Endothelial cell of umbilical vein (primary cell): ENCODE measurements at regions of chr13 and their contacts with region 1.

Region 1: DNA sequence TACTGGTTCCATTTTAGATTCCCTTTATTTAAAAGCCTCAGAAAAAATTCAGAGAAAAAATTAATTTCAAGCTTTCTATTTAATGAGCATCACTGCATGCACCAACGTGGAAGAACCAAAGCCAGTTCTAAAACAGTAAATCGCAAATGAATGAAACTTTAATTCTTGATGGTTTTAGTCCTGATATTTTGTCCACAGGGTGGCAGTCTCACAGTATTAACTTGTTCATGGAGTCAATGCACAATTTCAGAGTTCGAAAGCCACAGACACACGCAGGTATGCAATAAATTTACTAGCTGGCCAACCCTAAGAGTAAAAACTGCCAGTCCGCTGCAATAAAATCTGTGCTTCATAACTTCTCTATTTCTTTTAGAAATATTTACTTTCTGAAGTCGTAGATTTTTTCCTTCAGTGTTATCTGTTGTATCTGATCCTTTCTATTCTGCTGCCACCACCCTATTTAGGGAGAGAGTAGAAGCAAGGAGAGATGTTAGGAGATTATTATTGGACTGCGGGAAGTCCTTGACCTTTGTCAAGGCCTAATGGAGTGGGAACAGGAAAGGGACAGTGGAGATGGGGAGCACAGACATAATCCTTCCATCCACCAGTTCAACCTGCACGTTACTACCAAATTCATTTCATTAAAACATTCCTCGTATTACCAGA is 7.0 kb upstream of the WBP4 start:
- DNase-seq: peak; percentile 60
- H3K4me3 ChIP-seq: no peak overlapping the region
- H3K27ac ChIP-seq: no peak overlapping the region
- H3K4me1 ChIP-seq: peaks cover 27% of the 10 kb centered on the region
- H3K27me3 ChIP-seq: no peaks in the 10 kb centered on the region
- CTCF ChIP-seq: peak; percentile 20 to 35
- POLR2A ChIP-seq: no peak

Region 2: DNA sequence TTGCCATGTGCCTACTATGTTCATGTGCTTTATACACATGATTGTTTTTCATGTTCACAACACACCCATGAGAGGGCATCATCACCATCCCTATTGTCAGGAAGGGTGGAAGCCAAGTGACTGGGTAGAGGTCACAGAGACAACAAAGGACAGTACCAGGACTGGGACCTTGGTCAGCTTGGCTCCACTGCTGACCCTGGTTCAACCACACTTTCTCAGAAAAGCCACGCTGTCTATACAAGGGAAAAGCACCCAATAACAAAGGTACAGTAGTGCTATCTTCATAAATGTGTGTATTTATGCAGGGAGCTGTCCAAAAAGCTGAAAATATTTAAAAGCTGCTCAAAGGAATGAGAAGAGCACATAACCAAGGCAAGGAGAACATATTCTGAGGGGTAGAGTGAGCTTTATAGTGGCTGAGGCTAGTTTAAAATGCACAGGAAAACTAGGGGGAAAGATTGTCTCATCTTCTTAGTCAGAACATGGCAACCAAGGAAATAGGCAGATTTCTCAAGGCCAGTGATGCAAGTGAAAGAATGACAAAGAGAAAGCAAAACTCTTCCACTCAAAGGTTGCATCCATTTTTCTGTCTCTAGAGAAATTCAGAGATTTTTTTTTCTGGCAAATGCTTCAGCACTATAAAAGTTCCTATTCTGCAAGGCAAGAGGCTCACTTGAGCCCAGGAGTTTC is 802.9 kb before region 1 on chr13:
- CTCF ChIA-PET with region 1: no interaction called
- POLR2A ChIA-PET with region 1: no interaction called
- dilution Hi-C with region 1: no loop called
- intact Hi-C with region 1: no loop called
- DNase-seq: no peak
- H3K4me3 ChIP-seq: no peak overlapping the region
- H3K27ac ChIP-seq: no peak overlapping the region
- H3K4me1 ChIP-seq: peaks cover 11% of the 10 kb centered on the region
- H3K27me3 ChIP-seq: no peaks in the 10 kb centered on the region
- CTCF ChIP-seq: no peak
- POLR2A ChIP-seq: no peak

Region 3: DNA sequence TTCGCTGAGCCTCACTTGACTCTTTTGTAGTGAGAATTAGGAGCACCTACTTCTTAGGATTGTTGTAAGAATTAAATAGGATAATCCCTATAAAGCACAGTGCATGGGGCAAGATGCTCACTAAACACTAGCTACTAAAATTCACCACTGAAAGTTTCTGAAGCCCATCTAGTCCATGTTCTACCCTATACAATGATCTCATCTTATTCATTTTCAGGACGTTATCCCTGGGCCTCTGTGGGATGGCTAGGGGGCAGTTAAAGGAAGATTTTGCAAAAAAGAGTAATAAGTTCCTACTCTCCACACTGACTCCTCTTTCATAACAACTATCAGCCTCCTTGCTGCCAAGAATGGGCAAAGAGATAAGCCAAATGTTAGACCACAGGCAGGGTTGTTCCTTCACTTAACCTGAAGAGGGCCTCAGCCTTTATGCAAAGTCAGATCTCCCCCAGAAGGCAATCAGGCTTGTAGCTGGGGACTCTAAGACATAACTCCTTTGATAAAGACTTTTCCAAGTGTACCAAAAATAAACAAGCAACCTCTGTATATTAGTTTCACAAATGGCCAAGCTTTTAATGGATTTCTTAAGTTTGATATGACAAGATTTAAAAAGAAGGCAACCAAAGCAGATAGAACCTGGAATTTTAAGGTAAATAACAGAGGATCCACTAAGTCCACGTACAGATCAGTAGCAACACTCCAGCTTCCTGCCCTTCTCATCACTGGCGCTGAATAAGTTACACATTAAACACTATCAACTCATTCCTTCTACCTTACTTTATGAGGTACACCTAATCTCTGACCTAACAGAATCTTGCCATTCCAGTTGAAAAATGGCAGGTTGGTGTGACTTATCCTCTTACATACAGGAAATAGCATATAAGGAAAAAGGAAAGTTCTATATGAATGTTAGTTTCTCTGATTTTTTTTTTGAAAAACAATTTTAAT is 79.6 kb before region 1 on chr13:
- CTCF ChIA-PET with region 1: interaction called, 13 read pairs
- POLR2A ChIA-PET with region 1: no interaction called
- dilution Hi-C with region 1: no loop called
- intact Hi-C with region 1: loop called (anchors 1 kb)
- DNase-seq: peak; percentile 51
- H3K4me3 ChIP-seq: no peak overlapping the region
- H3K27ac ChIP-seq: no peak overlapping the region
- H3K4me1 ChIP-seq: peaks cover 24% of the 10 kb centered on the region
- H3K27me3 ChIP-seq: no peaks in the 10 kb centered on the region
- CTCF ChIP-seq: peak; percentile 33 to 51
- POLR2A ChIP-seq: no peak

Region 4: GRCh38 chr13:41955605-41956004 is 901.3 kb after region 1 on chr13:
- CTCF ChIA-PET with region 1: no interaction called
- POLR2A ChIA-PET with region 1: no interaction called
- dilution Hi-C with region 1: no loop called
- intact Hi-C with region 1: no loop called
- DNase-seq: no peak
- H3K4me3 ChIP-seq: no peak overlapping the region
- H3K27ac ChIP-seq: no peak overlapping the region
- H3K4me1 ChIP-seq: peaks cover 5% of the 10 kb centered on the region
- H3K27me3 ChIP-seq: no peaks in the 10 kb centered on the region
- CTCF ChIP-seq: no peak
- POLR2A ChIP-seq: no peak